GM10248 (cell line): ENCODE measurements at regions of chr12 and their contacts with region 1.

Region 1: GRCh38 chr12:118372541-118373495 is at the start of gene TAOK3:
- DNase-seq: peak; percentile 96
- CTCF ChIP-seq: no peak

Region 2: GRCh38 chr12:118061011-118061875 is 311.6 kb before region 1 on chr12 and contains the start of gene WSB2:
- CTCF ChIA-PET with region 1: interaction called, 10 read pairs
- POLR2A ChIA-PET with region 1: interaction called, 3 read pairs
- DNase-seq: peak; percentile 79
- CTCF ChIP-seq: no peak

Region 3: GRCh38 chr12:118150625-118151024 is 222.2 kb before region 1 on chr12:
- CTCF ChIA-PET with region 1: interaction called, 22 read pairs
- POLR2A ChIA-PET with region 1: no interaction called
- DNase-seq: no peak
- CTCF ChIP-seq: no peak

Region 4: GRCh38 chr12:118183705-118184104 is 189.1 kb before region 1 on chr12:
- CTCF ChIA-PET with region 1: interaction called, 142 read pairs
- POLR2A ChIA-PET with region 1: no interaction called
- DNase-seq: no peak
- CTCF ChIP-seq: no peak

Region 5: GRCh38 chr12:118334939-118335567 is 37.8 kb before region 1 on chr12:
- CTCF ChIA-PET with region 1: interaction called, 11 read pairs
- POLR2A ChIA-PET with region 1: no interaction called
- DNase-seq: no peak
- CTCF ChIP-seq: no peak

Region 6: GRCh38 chr12:118391424-118391823 is 18.6 kb after region 1 on chr12:
- CTCF ChIA-PET with region 1: interaction called, 89 read pairs
- POLR2A ChIA-PET with region 1: no interaction called
- DNase-seq: no peak
- CTCF ChIP-seq: no peak

Region 7: DNA sequence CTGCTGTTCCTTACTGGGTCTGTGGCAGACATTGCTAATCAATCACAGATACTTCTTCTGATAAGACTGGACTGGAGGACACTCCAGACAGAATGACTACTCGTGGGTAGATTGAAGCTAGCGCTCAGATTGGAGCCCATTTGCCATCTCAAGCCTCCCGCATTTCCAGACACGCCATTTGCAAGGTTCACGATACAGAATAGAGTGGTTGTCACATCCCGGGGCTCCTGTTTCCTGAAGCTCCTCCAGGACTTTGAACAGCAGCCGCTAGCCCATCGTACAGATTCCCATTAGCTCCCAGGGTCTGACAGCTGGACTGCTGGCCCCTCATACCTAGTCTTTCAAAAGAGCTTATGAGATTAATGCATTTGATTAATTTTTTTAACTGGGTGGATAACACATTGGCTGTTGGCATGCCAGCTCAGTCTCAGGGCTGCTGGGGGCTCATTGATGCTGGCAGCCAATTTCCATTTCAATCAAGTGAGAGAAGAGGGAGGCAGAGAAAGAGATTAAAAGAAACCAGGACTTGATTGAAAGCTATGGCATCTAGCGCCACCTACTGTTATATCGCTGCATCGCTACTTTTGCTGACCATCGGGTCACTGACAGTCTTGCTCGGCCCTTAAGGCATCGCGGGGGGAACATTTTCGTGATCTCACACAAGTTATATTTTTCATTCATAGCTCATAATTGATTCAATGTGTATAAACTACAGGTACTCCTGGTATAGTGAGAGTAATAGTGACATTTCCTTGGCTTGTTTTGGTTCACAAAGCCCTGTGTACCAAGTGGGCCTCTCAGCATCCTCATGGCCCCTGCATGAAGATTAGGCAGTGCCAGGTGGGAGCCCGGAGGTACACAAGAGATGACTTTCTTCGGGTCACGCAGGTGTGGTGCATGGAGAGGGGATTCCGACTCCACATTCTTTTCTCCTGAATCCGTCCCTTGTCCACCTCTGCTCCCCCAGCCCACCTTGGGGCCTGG is 1040.3 kb after region 1 on chr12:
- CTCF ChIA-PET with region 1: interaction called, 10 read pairs
- POLR2A ChIA-PET with region 1: no interaction called
- DNase-seq: peak; percentile 58
- CTCF ChIP-seq: peak; percentile 75